Endothelial cell of umbilical vein (primary cell): ENCODE measurements at regions of chr14 and their contacts with region 1.

Region 1: DNA sequence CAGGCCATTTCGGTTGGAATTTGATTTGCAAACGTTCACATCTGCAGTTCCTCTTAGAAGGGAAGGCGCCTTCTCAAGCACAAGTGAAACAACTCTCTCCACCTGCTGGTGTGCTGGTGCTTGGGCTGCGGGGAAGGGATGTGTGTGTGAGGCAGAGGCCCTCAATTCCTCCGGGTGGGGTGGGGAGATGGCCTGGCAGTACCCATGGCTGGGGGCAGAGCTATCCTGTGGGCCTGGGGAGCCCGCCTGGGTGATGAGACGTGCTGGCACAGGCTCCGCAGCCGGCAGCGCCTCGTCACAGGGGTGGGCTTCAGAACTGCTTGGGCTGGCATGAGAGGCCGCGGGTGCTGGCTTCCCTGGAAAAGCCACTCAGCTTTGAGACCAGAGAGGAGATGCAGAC is 28.9 kb upstream of the TDRD9 start:
- DNase-seq: no peak
- H3K4me3 ChIP-seq: no peak overlapping the region
- H3K27ac ChIP-seq: no peak overlapping the region
- H3K4me1 ChIP-seq: peaks cover 2% of the 10 kb centered on the region
- H3K27me3 ChIP-seq: no peaks in the 10 kb centered on the region
- CTCF ChIP-seq: no peak
- POLR2A ChIP-seq: no peak

Region 2: GRCh38 chr14:103641181-103641580 is 258.1 kb before region 1 on chr14:
- CTCF ChIA-PET with region 1: no interaction called
- POLR2A ChIA-PET with region 1: no interaction called
- dilution Hi-C with region 1: no loop called
- intact Hi-C with region 1: no loop called
- DNase-seq: no peak
- H3K4me3 ChIP-seq: no peak overlapping the region
- H3K27ac ChIP-seq: no peak overlapping the region
- H3K4me1 ChIP-seq: no peaks in the 10 kb centered on the region
- H3K27me3 ChIP-seq: no peaks in the 10 kb centered on the region
- CTCF ChIP-seq: no peak
- POLR2A ChIP-seq: no peak

Region 3: DNA sequence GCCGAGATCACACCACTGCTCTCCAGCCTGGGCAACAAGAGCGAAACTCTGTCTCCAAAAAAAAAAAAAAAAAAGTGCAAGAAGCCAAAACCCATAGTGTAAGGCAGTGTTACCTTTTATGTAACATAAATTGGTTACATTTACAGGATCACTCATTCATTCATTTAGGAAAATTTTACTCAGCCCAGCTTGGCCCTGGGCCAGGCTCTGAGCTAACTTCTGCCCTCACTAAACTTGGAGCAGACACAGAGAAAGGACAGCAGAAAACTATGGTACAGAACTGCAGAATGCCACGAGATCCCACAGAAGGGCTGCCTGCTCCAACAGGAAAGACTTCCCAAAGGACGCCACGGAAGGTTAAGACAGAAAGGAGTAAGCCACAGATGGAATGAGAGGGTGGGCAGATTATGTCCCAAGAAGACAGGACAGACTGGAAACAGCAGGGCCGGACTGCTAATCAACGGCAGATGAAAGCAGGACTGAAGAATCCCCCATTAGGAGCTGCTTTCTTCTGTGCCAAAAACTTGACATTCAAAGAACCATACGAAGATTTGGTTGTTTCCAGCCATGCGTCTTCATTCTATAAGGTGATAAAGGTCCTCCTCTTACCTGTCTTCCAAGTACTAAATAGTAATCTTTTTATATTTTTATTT is 70.9 kb before region 1 on chr14:
- CTCF ChIA-PET with region 1: interaction called, 16 read pairs
- POLR2A ChIA-PET with region 1: no interaction called
- dilution Hi-C with region 1: no loop called
- intact Hi-C with region 1: no loop called
- DNase-seq: peak; percentile 74
- H3K4me3 ChIP-seq: no peak overlapping the region
- H3K27ac ChIP-seq: no peak overlapping the region
- H3K4me1 ChIP-seq: peaks cover 3% of the 10 kb centered on the region
- H3K27me3 ChIP-seq: no peaks in the 10 kb centered on the region
- CTCF ChIP-seq: no peak
- POLR2A ChIP-seq: no peak

Region 4: DNA sequence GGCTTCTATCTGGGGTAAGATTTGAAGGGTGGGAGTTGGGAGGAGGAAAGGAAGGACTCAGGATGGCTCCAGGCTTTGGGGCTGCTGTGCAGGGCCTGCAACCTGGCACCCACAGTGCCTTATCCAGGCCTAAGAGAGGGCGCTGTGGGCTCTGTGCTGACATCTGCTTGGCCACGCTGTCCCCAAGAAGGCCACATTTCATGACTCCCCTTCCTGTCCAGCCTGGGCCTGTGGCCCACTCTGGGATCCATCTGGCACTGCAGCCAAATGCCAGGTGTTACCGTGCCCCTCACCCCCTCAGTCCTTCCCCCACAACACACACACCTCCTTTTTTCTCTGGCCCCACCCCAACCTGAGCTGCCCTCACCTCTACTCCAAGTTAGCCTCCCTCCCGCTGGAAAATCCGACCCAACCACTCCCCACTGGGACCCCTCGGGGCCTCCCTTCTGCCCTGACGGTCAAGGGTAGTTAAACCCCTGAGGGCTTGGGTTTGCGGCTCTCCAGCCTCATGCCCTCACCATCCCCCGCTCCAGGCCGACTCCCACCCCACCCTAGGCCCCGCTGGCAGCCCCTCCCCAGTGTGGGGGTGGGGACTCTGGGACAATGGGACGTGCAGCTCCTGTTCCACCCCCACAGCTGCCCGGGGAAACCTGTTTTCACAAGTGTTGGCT is 44.1 kb before region 1 on chr14:
- CTCF ChIA-PET with region 1: interaction called, 12 read pairs
- POLR2A ChIA-PET with region 1: no interaction called
- dilution Hi-C with region 1: no loop called
- intact Hi-C with region 1: loop called (anchors 2 kb)
- DNase-seq: peak; percentile 55
- H3K4me3 ChIP-seq: no peak overlapping the region
- H3K27ac ChIP-seq: no peak overlapping the region
- H3K4me1 ChIP-seq: peaks cover 21% of the 10 kb centered on the region
- H3K27me3 ChIP-seq: no peaks in the 10 kb centered on the region
- CTCF ChIP-seq: no peak
- POLR2A ChIP-seq: no peak

Region 5: GRCh38 chr14:103880348-103881267 is 18.7 kb before region 1 on chr14:
- CTCF ChIA-PET with region 1: interaction called, 81 read pairs
- POLR2A ChIA-PET with region 1: no interaction called
- dilution Hi-C with region 1: no loop called
- intact Hi-C with region 1: no loop called
- DNase-seq: peak; percentile 43
- H3K4me3 ChIP-seq: no peak overlapping the region
- H3K27ac ChIP-seq: no peak overlapping the region
- H3K4me1 ChIP-seq: peaks cover 26% of the 10 kb centered on the region
- H3K27me3 ChIP-seq: no peaks in the 10 kb centered on the region
- CTCF ChIP-seq: no peak
- POLR2A ChIP-seq: no peak

Region 6: GRCh38 chr14:103923863-103924262 is 24.5 kb after region 1 on chr14:
- CTCF ChIA-PET with region 1: interaction called, 11 read pairs
- POLR2A ChIA-PET with region 1: no interaction called
- dilution Hi-C with region 1: no loop called
- intact Hi-C with region 1: no loop called
- DNase-seq: peak; percentile 87
- H3K4me3 ChIP-seq: no peak overlapping the region
- H3K27ac ChIP-seq: no peak overlapping the region
- H3K4me1 ChIP-seq: peaks cover 2% of the 10 kb centered on the region
- H3K27me3 ChIP-seq: peaks cover 0 to 10% of the 10 kb centered on the region in 2 experiments
- CTCF ChIP-seq: no peak
- POLR2A ChIP-seq: no peak